Left ventricle myocardium superior (tissue), 1 donor: ENCODE measurements at regions of chr4 and their contacts with region 1.

Region 1: GRCh38 chr4:46270986-46271596 is 118.8 kb downstream of the GABRA2 start:
- DNase-seq: no peak
- ATAC-seq: no peak

Region 2: GRCh38 chr4:44760142-44760898 is 1510.8 kb before region 1 on chr4:
- intact Hi-C with region 1: loop called (anchors 5 kb)
- DNase-seq: no peak
- ATAC-seq: peak; percentile 77